Activated T-helper 2 cell treated with anti-CD3 and anti-CD28 coated beads, Interferon-gamma antibody, Interleukin-2, Interleukin-4, amounts not matched to agents 10 μg/mL and 5 μg/mL and 100 μg/mL, durations not matched to agents 14 hours and 24 hours and 36 hours (primary cell): ENCODE measurements at regions of chrX and their contacts with region 1.

Region 1: GRCh38 chrX:9285342-9285771 is 179.5 kb upstream of the TBL1X start:
- DNase-seq: peak; percentile 11
- H3K4me3 Mint-ChIP-seq: peak overlapping the region; percentile 60
- H3K27ac Mint-ChIP-seq: peak overlapping the region; percentile 92
- H3K4me1 Mint-ChIP-seq: peaks cover 32% of the 10 kb centered on the region
- H3K27me3 Mint-ChIP-seq: no peaks in the 10 kb centered on the region

Region 2: GRCh38 chrX:9163214-9163681 is 122.1 kb before region 1 on chrX:
- intact Hi-C with region 1: loop called (anchors 2 kb)
- DNase-seq: no peak
- H3K4me3 Mint-ChIP-seq: peak overlapping the region; percentile 8
- H3K27ac Mint-ChIP-seq: peak overlapping the region; percentile 81
- H3K4me1 Mint-ChIP-seq: peaks cover 55% of the 10 kb centered on the region
- H3K27me3 Mint-ChIP-seq: no peaks in the 10 kb centered on the region

Region 3: GRCh38 chrX:9258421-9259104 is 26.8 kb before region 1 on chrX:
- intact Hi-C with region 1: loop called (anchors 2 kb)
- DNase-seq: no peak
- H3K4me3 Mint-ChIP-seq: no peak overlapping the region
- H3K27ac Mint-ChIP-seq: peak overlapping the region; percentile 84
- H3K4me1 Mint-ChIP-seq: peaks cover 37% of the 10 kb centered on the region
- H3K27me3 Mint-ChIP-seq: no peaks in the 10 kb centered on the region

Region 4: GRCh38 chrX:9352694-9353411 is 67.5 kb after region 1 on chrX:
- intact Hi-C with region 1: loop called (anchors 1 kb)
- DNase-seq: peak; percentile 56
- H3K4me3 Mint-ChIP-seq: peak overlapping the region; percentile 56
- H3K27ac Mint-ChIP-seq: peak overlapping the region; percentile 82
- H3K4me1 Mint-ChIP-seq: peaks cover 39% of the 10 kb centered on the region
- H3K27me3 Mint-ChIP-seq: no peaks in the 10 kb centered on the region

Region 5: GRCh38 chrX:9416632-9417319 is 131.4 kb after region 1 on chrX:
- intact Hi-C with region 1: no loop called
- DNase-seq: no peak
- H3K4me3 Mint-ChIP-seq: no peak overlapping the region
- H3K27ac Mint-ChIP-seq: no peak overlapping the region
- H3K4me1 Mint-ChIP-seq: peaks cover 2% of the 10 kb centered on the region
- H3K27me3 Mint-ChIP-seq: peaks cover 3% of the 10 kb centered on the region

Region 6: DNA sequence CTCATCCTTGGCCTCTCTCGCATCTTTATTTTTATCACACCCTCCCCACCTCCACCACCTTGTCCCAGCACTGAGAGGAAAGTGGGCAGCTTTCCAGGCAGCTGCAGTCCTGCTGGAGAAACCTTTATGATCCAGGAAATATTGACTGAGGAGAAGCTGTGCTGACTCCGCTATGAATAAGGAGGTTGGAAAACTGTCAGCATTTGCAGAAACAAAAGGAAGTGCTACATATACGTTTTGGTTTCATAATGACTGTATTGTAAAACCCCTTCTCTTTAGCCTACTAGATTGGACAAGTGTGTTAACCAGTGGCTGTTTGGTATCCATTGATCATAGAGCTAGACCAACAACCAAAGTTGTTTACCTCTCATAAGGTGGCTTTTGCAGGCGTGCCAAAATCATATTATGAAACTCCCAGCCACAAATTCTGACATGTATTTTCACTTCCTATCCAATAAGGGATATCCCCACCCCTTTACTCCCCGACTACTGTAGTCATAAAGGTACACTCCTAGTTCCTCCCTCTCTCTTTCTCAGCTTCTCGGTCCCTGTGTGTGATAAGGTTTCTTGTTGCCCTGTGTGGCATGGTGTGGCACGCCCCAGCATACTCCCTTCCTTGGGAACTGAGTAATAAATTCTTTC is 391.9 kb after region 1 on chrX:
- intact Hi-C with region 1: loop called (anchors 1 kb)
- DNase-seq: peak; percentile 36
- H3K4me3 Mint-ChIP-seq: peak overlapping the region; percentile 37
- H3K27ac Mint-ChIP-seq: peak overlapping the region; percentile 71
- H3K4me1 Mint-ChIP-seq: peaks cover 29% of the 10 kb centered on the region
- H3K27me3 Mint-ChIP-seq: no peaks in the 10 kb centered on the region